Sigmoid colon (tissue), 7 donors: ENCODE measurements at regions of chr1 and their contacts with region 1.

Region 1: DNA sequence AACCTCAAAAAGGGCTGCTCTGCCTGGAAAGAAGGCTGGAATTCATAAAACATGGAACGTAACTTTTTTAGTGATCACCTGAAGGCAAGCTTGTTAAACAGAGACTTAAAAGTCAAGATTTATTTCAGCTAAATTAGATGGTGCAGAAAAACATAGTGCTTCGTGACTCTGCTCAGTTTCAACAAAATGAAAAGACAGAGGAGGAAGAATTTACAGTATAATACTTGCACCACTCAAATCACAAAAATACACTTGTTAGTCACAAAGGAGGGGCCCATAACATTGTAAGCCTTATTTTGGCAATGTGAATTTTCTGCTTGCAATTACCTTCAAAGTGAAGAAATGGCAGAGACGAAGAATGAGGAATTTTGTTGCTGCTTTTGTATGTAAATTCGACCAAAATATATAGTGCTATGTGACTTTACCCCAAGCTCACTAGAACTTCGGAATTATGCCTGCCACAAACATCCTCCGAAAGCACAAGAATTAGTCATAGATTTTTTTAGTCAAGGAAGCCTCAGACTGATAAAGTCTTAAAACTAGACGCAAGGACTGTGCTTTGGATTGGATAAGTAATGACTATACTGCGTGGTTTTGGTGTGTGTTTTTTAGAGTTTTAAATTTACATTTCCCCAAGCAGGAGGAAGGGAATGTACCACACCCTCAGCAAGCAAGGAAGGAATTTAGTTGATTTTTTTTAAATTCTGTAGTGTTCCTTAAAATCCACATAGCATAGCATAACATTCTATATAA is 10.5 kb downstream of the WLS start:
- DNase-seq: no peak
- H3K4me3 ChIP-seq: no peak overlapping the region
- H3K27ac ChIP-seq: peak overlapping the region; percentile 59 to 95 (median 69)
- H3K4me1 ChIP-seq: peaks cover 0 to 89% (median 73%) of the 10 kb centered on the region in 4 donors
- H3K27me3 ChIP-seq: no peaks in the 10 kb centered on the region
- CTCF ChIP-seq: no peak
- EP300 ChIP-seq: no peak
- POLR2A ChIP-seq: no peak

Region 2: DNA sequence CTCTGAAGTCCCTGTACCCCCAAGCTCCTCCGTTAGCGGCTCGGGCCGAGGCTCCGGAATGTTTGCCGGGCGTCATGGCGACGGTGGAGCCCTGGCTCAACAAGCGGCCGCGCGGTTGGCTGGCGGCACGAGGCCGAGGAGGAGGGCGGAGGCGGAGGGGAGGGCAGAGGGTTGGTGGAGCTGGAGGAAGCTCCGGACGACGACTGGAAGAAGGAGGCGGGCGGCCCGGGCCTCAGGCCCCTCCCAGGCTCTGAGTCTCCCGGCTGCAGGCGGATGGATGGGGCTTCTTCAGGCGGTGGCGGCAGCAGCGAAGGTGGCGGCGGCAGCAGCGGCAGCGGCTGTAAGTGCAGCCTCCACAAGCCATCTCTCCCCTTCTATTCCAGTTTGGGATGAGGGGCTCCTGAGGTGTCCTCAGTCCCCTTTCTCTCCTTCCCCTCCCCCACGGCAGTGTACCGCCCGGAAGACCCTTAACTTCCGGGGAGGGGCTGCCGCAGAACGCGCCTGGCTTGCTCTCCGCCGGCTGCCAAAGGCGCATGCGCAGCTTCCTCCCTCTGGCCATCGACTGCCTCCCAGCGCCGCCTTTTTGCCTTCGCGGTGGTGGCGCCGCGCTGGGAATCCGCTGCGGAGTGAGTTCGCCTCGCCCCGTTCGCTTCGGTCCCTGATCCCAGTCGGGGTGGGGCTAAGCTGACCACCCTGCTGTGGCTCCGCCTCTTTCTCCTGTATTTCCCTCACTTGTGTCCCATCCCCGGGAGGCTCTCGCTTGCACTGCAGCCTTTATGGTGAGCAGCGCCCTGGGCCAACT is 1296.8 kb before region 1 on chr1 and contains the starts of genes DNAI4 and MIER1:
- intact Hi-C with region 1: loop called (anchors 10 kb)
- DNase-seq: peak; percentile 99
- H3K4me3 ChIP-seq: peak within 1 kb of the TSS; percentile 59 to 91 (median 74)
- H3K27ac ChIP-seq: peak within 1 kb of the TSS; percentile 89 to 95 (median 92)
- H3K4me1 ChIP-seq: peaks cover 0 to 38% (median 32%) of the 10 kb centered on the region in 4 donors
- H3K27me3 ChIP-seq: no peaks in the 10 kb centered on the region
- CTCF ChIP-seq: peak; percentile 27 to 58 (median 40)
- EP300 ChIP-seq: peak in 2 of 4 donors; percentile 34 to 43
- POLR2A ChIP-seq: peak; percentile 23 to 65
- total RNA-seq, gene DNAI4: 5.6 to 16.1 (median 9.5) TPM
- total RNA-seq, gene MIER1: 49.0 to 65.6 (median 58.4) TPM